Breast epithelium (tissue), 4 donors: ENCODE measurements at regions of chr14 and their contacts with region 1.

Region 1: DNA sequence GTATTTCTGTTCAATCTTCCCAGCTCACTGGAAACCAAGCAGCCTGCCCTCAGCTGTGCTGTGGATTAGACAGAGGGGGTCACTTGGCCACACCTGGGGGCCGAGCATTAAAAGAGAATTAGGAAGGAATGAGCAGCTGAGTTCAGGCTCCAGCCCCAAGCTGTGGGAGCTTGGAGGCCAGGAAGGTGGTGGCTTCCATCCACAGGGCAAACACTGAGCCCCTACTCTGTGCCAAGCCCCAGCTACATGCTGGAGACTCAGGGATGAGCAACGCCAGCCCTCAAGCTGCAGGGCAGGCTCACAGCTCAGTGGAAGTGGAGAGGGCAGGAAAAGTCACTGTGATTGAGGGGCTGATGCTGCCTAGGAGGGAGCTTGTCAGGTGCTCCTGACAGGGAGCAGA is 412.7 kb downstream of the BCL11B start:
- DNase-seq: no peak
- H3K4me3 ChIP-seq: no peak overlapping the region
- H3K27ac ChIP-seq: no peak overlapping the region
- H3K4me1 ChIP-seq: no peaks in the 10 kb centered on the region
- H3K27me3 ChIP-seq: no peaks in the 10 kb centered on the region
- CTCF ChIP-seq: no peak
- POLR2A ChIP-seq: no peak

Region 2: GRCh38 chr14:98871796-98872195 is 12.5 kb after region 1 on chr14:
- intact Hi-C with region 1: loop called (anchors 1 kb)
- DNase-seq: no peak
- H3K4me3 ChIP-seq: no peak overlapping the region
- H3K27ac ChIP-seq: no peak overlapping the region
- H3K4me1 ChIP-seq: no peaks in the 10 kb centered on the region
- H3K27me3 ChIP-seq: no peaks in the 10 kb centered on the region
- CTCF ChIP-seq: no peak
- POLR2A ChIP-seq: no peak